ENCODE measurements at regions of chr14 and their contacts with region 1.

Region 1: GRCh38 chr14:90758028-90758889 is 58.0 kb downstream of the TTC7B start:
- DNase-seq: peak; percentile 97
- ATAC-seq: peak; percentile 93
- H3K4me3 Mint-ChIP-seq: peak overlapping the region; percentile 74
- H3K27ac Mint-ChIP-seq: peak overlapping the region; percentile 79
- H3K4me1 Mint-ChIP-seq: peaks cover 32% of the 10 kb centered on the region
- H3K27me3 Mint-ChIP-seq: peaks cover 2% of the 10 kb centered on the region

Region 2: GRCh38 chr14:90256354-90257131 is 501.7 kb before region 1 on chr14 and contains the start of gene PSMC1:
- CTCF ChIA-PET with region 1: interaction called, 4 read pairs
- POLR2A ChIA-PET with region 1: no interaction called
- intact Hi-C with region 1: loop called in 1 of 2 experiments (anchors 2 kb)
- DNase-seq: peak; percentile 94
- ATAC-seq: peak; percentile 97
- H3K4me3 Mint-ChIP-seq: peak within 1 kb of the TSS; percentile 99
- H3K27ac Mint-ChIP-seq: peak within 1 kb of the TSS; percentile 97
- H3K4me1 Mint-ChIP-seq: peaks cover 26% of the 10 kb centered on the region
- H3K27me3 Mint-ChIP-seq: no peaks in the 10 kb centered on the region
- total RNA-seq, gene PSMC1: 77.3 to 127 TPM

Region 3: DNA sequence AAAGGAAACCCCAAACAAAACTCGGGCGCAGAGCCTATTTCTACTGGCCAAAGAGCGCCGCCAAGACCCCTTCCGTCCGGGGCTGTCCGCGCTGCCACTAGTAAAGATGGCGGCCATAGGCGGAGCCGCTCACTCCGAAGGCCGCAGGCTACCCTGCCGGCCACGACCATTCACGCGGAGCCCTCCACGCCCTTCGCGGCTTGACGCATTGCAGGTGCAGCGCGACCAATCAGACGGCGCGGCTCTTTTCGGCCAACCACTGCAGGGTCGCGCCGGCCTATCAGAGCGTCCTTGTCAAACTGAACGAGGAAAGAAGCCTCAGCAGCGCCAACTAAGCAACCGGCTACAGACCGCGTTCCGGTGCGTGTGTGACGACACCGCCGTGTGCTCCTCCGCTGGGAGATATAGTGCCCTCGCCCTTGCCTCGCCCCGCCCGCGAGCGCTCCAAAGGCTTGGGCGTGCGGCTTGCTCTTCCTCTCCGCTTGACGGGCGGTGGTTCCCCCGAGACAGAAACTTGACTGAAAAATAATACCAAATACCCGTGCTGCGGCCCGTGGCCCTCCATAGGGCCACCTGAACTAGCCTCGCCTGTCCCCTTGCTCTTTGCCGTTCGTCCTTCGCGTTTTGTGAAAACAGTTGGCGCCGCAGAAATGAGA is 375.1 kb before region 1 on chr14:
- CTCF ChIA-PET with region 1: interaction called, 5 read pairs
- POLR2A ChIA-PET with region 1: interaction called, 8 read pairs
- intact Hi-C with region 1: loop called (anchors 1 kb)
- DNase-seq: peak; percentile 99
- ATAC-seq: peak; percentile 89
- H3K4me3 Mint-ChIP-seq: no peak overlapping the region
- H3K27ac Mint-ChIP-seq: no peak overlapping the region
- H3K4me1 Mint-ChIP-seq: peaks cover 27% of the 10 kb centered on the region
- H3K27me3 Mint-ChIP-seq: no peaks in the 10 kb centered on the region

Region 4: DNA sequence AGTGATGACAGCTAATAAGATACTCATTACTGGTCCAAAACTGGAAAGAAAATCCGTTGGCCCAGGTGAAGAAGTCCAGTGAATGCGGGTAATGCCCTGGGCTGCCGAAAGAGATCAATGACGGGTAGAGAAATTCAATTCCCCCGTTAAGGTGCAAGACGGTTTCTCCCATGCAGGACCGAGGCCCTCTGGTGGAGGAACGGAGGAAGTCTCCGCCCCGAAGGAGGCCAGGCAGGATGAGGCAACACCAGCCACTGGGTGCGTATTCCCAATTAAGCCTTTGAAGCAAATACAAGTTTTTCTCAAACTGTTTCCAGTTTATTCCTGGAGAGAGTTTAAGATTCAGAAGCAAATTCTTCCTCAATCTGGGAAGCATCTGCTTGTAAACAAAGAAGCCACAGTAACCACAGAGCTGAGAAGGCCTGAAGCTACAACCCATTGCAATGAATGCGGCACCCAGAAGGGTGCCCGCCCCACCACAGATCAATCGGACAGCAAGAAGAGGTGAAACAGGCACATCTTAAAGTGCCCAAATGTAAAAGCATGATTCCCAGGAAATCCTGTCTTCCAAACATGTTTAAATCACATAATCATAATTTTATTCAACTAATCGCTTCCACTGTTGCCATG is 60.6 kb before region 1 on chr14:
- CTCF ChIA-PET with region 1: interaction called, 11 read pairs
- POLR2A ChIA-PET with region 1: no interaction called
- intact Hi-C with region 1: loop called in 1 of 2 experiments (anchors 2 kb)
- DNase-seq: peak; percentile 87
- ATAC-seq: peak; percentile 95
- H3K4me3 Mint-ChIP-seq: no peak overlapping the region
- H3K27ac Mint-ChIP-seq: no peak overlapping the region
- H3K4me1 Mint-ChIP-seq: no peaks in the 10 kb centered on the region
- H3K27me3 Mint-ChIP-seq: no peaks in the 10 kb centered on the region

Region 5: DNA sequence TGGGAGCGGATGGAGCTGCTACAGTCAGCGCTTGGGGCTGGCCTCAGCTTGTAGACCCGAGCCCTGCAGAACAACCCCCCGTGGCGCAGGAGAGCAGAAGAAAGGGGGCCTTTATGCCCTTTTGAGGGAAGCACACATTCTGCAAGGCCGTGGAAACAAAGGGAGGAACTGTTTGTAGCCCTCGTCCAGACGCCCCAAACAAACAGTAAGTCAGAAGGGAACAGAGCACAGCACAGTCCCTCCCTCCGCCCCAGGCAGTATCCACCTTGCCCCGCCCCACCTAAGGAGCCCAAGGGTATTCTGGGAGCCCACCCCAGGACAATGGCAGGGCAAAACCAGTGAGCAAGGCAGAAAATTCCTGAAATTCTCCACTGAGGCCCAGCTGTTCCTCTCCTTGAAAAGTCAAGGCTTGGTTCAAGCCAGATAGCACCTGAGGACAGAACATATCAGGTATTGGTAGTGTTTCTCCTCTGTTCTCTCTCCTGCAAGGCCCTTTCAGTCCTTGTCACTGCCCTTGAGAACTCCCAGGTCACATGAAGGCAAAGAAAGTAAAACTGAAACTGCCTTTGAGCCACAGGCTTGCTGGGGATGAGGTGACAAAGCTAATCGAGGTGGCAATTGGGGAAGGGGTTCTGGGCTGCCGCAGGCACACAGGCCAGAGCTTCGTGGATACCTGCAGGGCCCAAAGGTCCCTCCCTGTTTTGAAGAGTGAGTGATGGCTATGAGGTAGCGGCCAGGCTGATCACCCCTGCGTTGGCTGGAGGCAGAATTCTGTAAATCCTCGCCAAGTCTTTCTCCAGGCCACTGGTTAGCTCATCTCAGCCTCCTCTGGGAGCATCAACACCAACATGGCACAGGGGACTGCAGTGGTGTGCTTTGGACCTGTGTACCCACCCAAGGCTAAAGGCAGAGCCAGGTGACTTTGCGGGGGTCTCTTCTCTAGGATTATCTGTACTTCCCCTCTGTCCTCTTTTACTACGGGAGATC is 356.1 kb after region 1 on chr14:
- CTCF ChIA-PET with region 1: no interaction called
- POLR2A ChIA-PET with region 1: no interaction called
- intact Hi-C with region 1: loop called in 1 of 2 experiments (anchors 2 kb)
- DNase-seq: peak; percentile 82
- ATAC-seq: peak; percentile 82
- H3K4me3 Mint-ChIP-seq: peak overlapping the region; percentile 99
- H3K27ac Mint-ChIP-seq: peak overlapping the region; percentile 99
- H3K4me1 Mint-ChIP-seq: peaks cover 70% of the 10 kb centered on the region
- H3K27me3 Mint-ChIP-seq: no peaks in the 10 kb centered on the region

Region 6: DNA sequence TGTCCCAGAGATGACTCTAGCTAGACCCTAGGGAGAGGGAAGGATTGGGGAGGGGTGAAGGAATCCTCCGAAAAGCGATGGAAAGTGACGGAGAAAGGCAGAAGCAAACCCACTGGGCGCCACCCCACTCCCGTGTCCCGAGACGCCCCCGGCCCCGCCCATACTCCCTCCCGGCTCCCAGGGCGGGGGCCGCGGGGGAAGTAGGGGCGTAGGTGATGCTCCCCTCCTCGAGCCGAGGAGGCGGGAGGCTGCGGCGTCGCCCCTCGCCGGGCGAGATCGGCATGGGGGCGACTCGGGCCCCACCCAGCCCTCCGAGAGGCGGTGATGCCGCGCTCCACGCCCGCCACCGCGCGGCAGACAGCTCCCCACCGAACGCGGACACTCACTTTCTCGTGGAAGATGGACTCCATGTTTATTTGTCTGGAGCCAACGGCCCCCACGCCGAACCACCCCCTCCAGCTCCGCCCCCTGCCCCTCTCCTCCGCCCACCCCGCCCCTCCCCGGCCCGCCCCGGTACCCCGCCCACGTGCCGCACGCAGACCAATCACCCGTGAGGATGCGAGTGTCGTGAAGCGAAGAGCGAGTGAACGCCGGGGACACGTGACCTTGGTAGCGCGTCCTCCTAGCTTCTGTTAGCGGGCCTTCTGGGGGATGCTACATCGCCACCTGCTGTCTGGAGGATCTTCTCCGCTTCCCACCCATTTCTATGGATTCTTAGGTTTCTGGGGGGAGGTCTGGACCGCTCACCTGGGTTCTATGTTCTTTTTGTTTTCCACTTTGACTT is 1348.1 kb after region 1 on chr14 and contains the start of gene ATXN3:
- CTCF ChIA-PET with region 1: no interaction called
- POLR2A ChIA-PET with region 1: no interaction called
- intact Hi-C with region 1: loop called in 1 of 2 experiments (anchors 5 kb)
- DNase-seq: peak; percentile 98
- ATAC-seq: peak; percentile 97
- H3K4me3 Mint-ChIP-seq: peak within 1 kb of the TSS; percentile 90
- H3K27ac Mint-ChIP-seq: peak within 1 kb of the TSS; percentile 92
- H3K4me1 Mint-ChIP-seq: peaks cover 42% of the 10 kb centered on the region
- H3K27me3 Mint-ChIP-seq: no peaks in the 10 kb centered on the region
- total RNA-seq, gene ATXN3: 32.7 to 36.0 TPM

Measured in activated CD4-positive, alpha-beta T cell treated with anti-CD3 and anti-CD28 coated beads for 36 hours (primary cell).